ENCODE measurements at regions of chr20 and their contacts with region 1.

Region 1: GRCh38 chr20:57718490-57719271 is 8.9 kb upstream of the PMEPA1 start:
- DNase-seq: peak; percentile 98
- ATAC-seq: peak; percentile 96

Region 2: GRCh38 chr20:57480444-57481160 is 238.1 kb before region 1 on chr20:
- intact Hi-C with region 1: no loop called
- DNase-seq: no peak
- ATAC-seq: no peak

Region 3: GRCh38 chr20:57682184-57683101 is 36.2 kb before region 1 on chr20:
- intact Hi-C with region 1: no loop called
- DNase-seq: no peak
- ATAC-seq: no peak

Region 4: DNA sequence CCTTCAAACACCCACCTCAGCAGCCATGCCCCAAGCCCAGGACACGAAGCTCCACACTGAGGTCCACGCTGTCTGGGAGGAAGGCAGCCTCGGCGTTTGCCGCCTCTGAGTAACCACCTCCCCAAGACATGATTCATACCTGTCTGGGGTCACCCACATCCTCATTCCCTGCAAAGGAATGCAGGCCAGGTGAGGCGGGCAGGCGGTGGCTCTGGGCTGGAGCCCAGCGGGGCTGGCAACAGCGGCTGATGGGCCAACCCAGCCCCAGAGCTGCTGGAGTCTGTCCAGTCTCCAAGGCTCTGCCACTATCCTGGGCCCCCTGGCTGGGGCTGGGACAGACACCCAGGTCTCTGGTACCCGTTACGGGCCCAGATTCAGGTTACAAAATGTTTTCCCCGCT is 23.7 kb before region 1 on chr20:
- intact Hi-C with region 1: loop called (anchors 1 kb)
- DNase-seq: no peak
- ATAC-seq: no peak

Region 5: GRCh38 chr20:57707849-57708693 is 10.6 kb before region 1 on chr20:
- intact Hi-C with region 1: no loop called
- DNase-seq: no peak
- ATAC-seq: peak; percentile 35

Region 6: GRCh38 chr20:57772276-57773030 is 53.8 kb after region 1 on chr20:
- intact Hi-C with region 1: no loop called
- DNase-seq: no peak
- ATAC-seq: peak; percentile 10

Region 7: DNA sequence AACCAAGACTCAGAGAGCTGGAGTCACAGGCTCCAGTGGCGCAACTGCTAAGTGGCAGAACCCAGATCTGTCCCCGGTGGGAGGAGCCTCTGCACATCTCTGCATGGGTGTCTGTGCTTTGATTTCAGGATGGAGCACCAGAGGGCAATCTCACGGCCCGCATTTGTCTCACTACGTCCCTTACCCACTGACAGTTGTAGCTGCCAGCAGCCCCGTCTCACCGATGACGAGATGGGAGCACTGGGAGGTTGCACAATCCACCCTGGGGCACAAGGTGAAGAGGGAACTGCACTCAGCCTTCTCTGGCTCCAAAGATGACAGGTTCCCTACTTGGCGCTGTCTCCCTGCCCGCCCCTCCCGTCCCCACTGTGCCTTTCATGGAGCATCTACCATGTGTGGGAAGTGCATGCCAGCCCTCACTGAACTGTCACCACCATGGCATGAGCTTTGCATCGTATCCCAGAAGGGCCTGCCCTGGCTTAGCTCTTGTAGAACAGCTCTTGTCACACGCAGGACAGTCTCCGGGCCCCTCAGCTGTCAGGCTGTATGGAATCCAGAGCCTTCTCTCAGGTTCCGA is 91.0 kb after region 1 on chr20:
- intact Hi-C with region 1: loop called (anchors 2 kb)
- DNase-seq: peak; percentile 78
- ATAC-seq: peak; percentile 85

Region 8: DNA sequence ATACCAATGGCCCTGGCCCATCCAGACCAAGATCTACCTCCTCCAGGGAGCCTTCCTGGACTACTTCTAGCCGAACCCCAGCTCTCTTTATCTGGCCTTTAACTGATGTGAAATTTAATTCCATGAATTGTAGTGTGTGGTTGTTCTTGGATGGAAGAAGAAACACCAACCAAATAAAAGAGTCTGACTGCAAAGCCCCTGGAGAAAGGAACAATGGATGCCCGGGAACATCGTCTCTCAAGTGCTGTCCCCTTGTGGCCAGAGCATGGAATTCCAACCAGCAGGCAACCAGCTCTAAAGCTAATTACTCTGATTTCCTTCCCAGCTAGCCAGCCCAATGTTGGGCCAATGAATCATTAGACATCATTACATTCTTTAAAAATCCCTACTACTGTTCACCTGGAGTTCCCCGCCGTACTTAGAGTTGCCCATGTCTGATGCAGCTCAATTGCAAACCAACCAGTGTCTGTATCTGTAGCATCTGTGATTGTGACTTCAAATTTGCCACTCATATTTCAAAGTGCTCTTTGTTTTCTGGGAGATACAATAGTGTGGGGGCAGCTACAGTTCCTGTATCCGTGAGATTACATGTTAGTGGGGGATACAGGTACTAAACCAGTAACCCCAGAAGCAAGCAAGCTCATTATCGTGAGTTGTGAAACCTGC is 368.6 kb after region 1 on chr20:
- intact Hi-C with region 1: loop called (anchors 10 kb)
- DNase-seq: no peak
- ATAC-seq: no peak

Measured in Right ventricle myocardium inferior (tissue), 1 donor.